Activated T-helper 1 cell treated with anti-CD3 and anti-CD28 coated beads, Interleukin-12 subunit alpha, Interleukin-12 subunit beta, Interleukin-2, Interleukin-4 antibody, amounts not matched to agents 30 ng/mL and 10 ng/mL and 1 ng/mL, durations not matched to agents 14 hours and 24 hours and 36 hours (primary cell): ENCODE measurements at regions of chr7 and their contacts with region 1.

Region 1: DNA sequence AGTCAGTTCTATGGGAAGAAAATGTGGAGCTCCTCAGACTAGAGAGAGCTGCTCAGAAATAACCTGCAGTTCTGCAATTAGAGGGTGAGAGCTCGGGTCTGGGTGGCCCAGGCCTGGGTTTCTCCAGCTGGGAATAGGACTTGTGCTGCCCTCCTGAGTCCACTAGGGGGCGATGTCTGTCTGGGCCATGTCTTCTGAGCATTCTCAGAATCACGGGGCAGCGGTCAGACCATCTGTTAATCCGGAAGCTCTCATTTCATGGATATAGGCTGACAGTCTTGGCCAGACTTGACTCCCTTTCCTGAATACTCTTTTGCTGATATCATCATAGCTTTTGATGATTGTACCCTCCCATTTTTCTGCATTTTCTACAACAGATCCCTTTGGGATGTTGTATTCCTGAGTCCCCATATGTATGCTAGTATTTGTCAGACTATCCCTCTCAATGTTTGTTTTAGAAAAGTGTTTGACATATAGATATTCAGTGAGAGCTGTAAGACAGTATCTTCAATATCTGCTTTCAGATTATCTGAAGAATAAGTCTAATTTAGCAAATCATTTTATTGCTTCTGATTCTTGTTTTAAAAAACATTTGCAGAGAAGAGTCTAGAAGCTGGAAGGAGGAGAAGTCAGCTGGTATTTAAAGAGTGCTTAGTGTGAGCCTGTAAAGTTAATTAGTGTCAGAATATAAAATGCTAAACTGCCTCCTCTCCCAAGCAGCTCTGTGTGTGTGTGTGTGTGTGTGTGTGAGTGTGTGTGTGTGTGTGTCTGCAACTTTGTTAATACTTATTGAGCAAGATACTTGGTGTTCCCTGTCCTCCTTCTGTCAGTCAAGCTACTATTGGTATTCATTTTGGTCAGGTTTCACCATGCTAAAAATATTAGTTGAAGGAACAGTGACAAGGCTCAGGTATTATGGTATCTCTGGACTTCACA is 38.0 kb downstream of the STARD3NL start:
- DNase-seq: peak; percentile 63
- H3K4me3 Mint-ChIP-seq: no peak overlapping the region
- H3K27ac Mint-ChIP-seq: no peak overlapping the region
- H3K4me1 Mint-ChIP-seq: peaks cover 45% of the 10 kb centered on the region
- H3K27me3 Mint-ChIP-seq: no peaks in the 10 kb centered on the region

Region 2: GRCh38 chr7:38107486-38107893 is 108.5 kb before region 1 on chr7:
- intact Hi-C with region 1: loop called (anchors 2 kb)
- DNase-seq: peak; percentile 31
- H3K4me3 Mint-ChIP-seq: no peak overlapping the region
- H3K27ac Mint-ChIP-seq: no peak overlapping the region
- H3K4me1 Mint-ChIP-seq: no peaks in the 10 kb centered on the region
- H3K27me3 Mint-ChIP-seq: peaks cover 39% of the 10 kb centered on the region

Region 3: DNA sequence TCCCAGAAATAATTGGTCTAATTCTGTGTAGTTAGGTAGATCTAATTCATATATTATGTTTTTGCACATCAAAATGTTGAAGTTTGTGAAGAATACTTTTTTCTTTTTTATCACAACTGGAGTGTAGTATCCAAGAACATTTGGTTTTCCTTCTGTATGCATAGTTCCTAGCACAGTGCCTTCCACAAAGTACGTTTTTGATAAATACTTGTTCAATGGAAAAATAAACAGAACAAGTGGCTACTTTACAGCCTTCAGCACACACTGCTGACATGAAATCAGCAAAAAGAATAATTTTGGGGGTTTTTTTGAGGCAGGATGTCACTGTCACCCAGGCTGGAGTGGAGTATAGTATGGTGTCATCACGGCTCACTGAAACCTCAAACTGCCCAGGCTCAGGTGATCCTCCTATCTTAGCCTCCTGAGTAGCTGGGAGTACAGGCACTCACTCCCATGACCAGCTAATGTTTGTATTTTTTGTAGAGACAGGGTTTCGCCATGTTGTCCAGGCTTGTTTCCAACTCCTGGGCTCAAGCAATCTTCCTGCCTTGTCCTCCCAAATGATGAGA is 29.5 kb after region 1 on chr7:
- intact Hi-C with region 1: loop called (anchors 5 kb)
- DNase-seq: no peak
- H3K4me3 Mint-ChIP-seq: no peak overlapping the region
- H3K27ac Mint-ChIP-seq: no peak overlapping the region
- H3K4me1 Mint-ChIP-seq: peaks cover 14% of the 10 kb centered on the region
- H3K27me3 Mint-ChIP-seq: peaks cover 7% of the 10 kb centered on the region

Region 4: GRCh38 chr7:38335492-38336147 is 119.6 kb after region 1 on chr7:
- intact Hi-C with region 1: loop called (anchors 1 kb)
- DNase-seq: peak; percentile 72
- H3K4me3 Mint-ChIP-seq: peak overlapping the region; percentile 64
- H3K27ac Mint-ChIP-seq: peak overlapping the region; percentile 43
- H3K4me1 Mint-ChIP-seq: peaks cover 35% of the 10 kb centered on the region
- H3K27me3 Mint-ChIP-seq: no peaks in the 10 kb centered on the region

Region 5: GRCh38 chr7:38660427-38661099 is 444.6 kb after region 1 on chr7:
- intact Hi-C with region 1: loop called (anchors 1 kb)
- DNase-seq: no peak
- H3K4me3 Mint-ChIP-seq: no peak overlapping the region
- H3K27ac Mint-ChIP-seq: no peak overlapping the region
- H3K4me1 Mint-ChIP-seq: no peaks in the 10 kb centered on the region
- H3K27me3 Mint-ChIP-seq: peaks cover 3% of the 10 kb centered on the region

Region 6: GRCh38 chr7:39589323-39590111 is 1373.5 kb after region 1 on chr7:
- intact Hi-C with region 1: no loop called
- DNase-seq: peak; percentile 77
- H3K4me3 Mint-ChIP-seq: peak overlapping the region; percentile 63
- H3K27ac Mint-ChIP-seq: peak overlapping the region; percentile 80
- H3K4me1 Mint-ChIP-seq: peaks cover 69% of the 10 kb centered on the region
- H3K27me3 Mint-ChIP-seq: no peaks in the 10 kb centered on the region